H1 (cell line): ENCODE measurements at regions of chr7 and their contacts with region 1.

Region 1: DNA sequence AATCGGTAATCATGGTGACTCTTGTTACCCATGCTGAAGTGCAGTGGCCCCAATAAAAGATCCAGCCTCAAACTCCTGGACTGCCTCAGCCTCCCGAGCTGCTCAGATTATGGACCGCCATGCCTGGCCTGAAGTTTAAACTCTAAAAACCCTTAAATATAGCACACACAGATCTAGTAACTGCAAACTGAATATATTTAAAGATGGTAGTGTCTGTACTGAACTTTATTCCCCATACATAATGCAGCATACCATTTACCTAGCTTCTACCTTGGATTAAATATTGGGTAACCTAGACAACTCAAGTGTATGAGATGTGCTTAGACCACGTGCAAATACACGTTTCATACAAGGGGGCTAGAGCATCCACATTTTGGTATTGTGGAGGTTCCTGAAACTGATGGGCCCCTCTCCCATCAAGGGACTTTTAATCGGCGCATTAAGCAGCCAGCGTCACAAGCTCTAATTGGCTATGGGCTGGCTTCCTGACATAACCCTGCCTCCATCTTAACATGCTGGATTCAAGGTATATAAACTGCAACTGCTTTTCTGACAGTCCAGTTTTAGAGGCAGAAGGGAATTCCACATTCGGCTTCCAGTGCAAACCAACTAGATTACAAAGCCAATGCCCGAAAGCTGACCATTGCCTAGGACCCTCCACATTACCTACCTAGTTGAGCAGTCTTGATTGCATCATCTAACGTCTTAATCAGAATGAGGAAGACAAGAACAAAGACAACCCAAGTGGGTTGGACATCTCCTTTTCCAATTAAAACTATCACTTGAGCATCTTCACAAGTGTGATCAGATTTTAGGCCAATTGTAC is 13.0 kb downstream of the HNRNPA2B1 start:
- DNase-seq: no peak
- H3K4me3 ChIP-seq: no peak overlapping the region
- H3K27ac ChIP-seq: peak overlapping the region; percentile 13
- H3K4me1 ChIP-seq: no peaks in the 10 kb centered on the region
- H3K27me3 ChIP-seq: no peaks in the 10 kb centered on the region
- CTCF ChIP-seq: no peak
- EP300 ChIP-seq: no peak
- POLR2A ChIP-seq: peak; percentile 89 to 92
- RAD21 ChIP-seq: no peak

Region 2: GRCh38 chr7:26078437-26079336 is 108.9 kb before region 1 on chr7:
- CTCF ChIA-PET with region 1: interaction called, 5 read pairs
- POLR2A ChIA-PET with region 1: interaction called, 230 read pairs
- DNase-seq: peak; percentile 36 to 87
- H3K4me3 ChIP-seq: peak overlapping the region in 1 of 4 experiments; percentile 3; a peak in 1 of 8 replicates
- H3K27ac ChIP-seq: no peak overlapping the region
- H3K4me1 ChIP-seq: peaks cover 1 to 7% (median 3%) of the 10 kb centered on the region in 4 experiments; a peak in 3 of 7 replicates
- H3K27me3 ChIP-seq: no peaks in the 10 kb centered on the region; a peak in 2 of 7 replicates
- CTCF ChIP-seq: peak; percentile 49 to 64 (median 56)
- EP300 ChIP-seq: no peak
- POLR2A ChIP-seq: no peak
- RAD21 ChIP-seq: peak; percentile 46 to 66; a peak in 3 of 4 replicates

Region 3: GRCh38 chr7:26101361-26102151 is 86.0 kb before region 1 on chr7:
- CTCF ChIA-PET with region 1: no interaction called
- POLR2A ChIA-PET with region 1: interaction called, 19 read pairs
- DNase-seq: peak in 1 of 2 experiments; percentile 61
- H3K4me3 ChIP-seq: peak overlapping the region in 1 of 4 experiments; percentile 7; a peak in 1 of 8 replicates
- H3K27ac ChIP-seq: peak overlapping the region; percentile 53; the same call in 1 of the 2 replicates
- H3K4me1 ChIP-seq: peaks cover 7 to 16% (median 12%) of the 10 kb centered on the region in 4 experiments
- H3K27me3 ChIP-seq: no peaks in the 10 kb centered on the region
- CTCF ChIP-seq: no peak
- EP300 ChIP-seq: no peak
- POLR2A ChIP-seq: no peak; a peak in 1 of 3 replicates
- RAD21 ChIP-seq: 0 out of 4 replicates have a peak, but pooled peaks of 1 of the 2 experiments have one; percentile 2

Region 4: DNA sequence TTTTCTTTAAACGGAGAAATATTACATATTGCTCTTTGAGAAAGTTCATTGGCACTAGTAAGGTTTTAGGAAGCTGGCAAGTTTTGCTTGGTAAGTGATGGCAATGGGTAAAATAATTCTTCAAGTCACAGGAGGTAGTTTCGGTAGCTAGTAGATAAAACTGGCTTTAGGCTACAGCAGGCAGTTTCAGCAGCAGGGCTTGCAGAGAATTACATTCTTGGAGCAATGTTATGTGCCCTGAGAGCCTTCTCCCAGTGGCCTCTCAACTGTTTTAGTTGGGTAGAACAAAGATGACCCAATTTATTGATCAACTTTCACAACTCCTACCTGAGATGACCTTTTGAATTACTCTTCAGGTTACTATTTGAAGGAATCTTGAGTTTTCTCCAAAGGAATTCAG is 52.1 kb before region 1 on chr7:
- CTCF ChIA-PET with region 1: no interaction called
- POLR2A ChIA-PET with region 1: interaction called, 13 read pairs
- DNase-seq: no peak
- H3K4me3 ChIP-seq: no peak overlapping the region
- H3K27ac ChIP-seq: no peak overlapping the region
- H3K4me1 ChIP-seq: no peaks in the 10 kb centered on the region
- H3K27me3 ChIP-seq: no peaks in the 10 kb centered on the region; a peak in 1 of 7 replicates
- CTCF ChIP-seq: no peak
- EP300 ChIP-seq: no peak
- POLR2A ChIP-seq: no peak
- RAD21 ChIP-seq: no peak

Region 5: DNA sequence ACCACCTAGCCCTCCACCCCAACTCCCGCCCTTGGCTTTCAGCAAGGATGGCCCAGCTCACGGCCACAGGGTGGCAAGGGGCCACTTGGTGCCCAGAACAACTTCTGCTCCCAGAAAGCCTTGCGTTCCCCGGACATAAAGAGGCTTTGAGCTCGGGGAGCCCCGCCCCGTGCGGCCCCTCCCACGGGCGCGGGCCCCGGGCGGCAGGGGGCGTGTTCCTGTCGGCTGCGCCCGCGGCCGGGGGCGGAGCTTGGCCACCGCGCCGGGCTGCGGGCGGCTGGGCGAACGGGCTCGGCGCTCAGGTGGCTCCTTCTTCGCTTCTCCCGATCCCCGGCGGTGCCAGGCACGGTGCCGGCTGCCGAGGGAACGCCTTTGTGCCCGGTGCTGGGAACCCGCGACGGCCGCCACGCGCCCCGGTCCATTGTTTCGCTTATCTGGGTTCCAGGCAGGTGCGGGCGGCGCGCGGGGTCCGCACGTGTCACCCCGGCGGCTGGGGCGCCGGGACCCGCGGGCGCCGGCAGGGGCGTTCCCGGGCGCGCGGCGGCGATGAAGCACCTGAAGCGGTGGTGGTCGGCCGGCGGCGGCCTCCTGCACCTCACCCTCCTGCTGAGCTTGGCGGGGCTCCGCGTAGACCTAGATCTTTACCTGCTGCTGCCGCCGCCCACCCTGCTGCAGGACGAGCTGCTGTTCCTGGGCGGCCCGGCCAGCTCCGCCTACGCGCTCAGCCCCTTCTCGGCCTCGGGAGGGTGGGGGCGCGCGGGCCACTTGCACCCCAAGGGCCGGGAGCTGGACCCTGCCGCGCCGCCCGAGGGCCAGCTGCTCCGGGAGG is 35.4 kb before region 1 on chr7 and contains the start of gene NFE2L3:
- CTCF ChIA-PET with region 1: interaction called, 4 read pairs
- POLR2A ChIA-PET with region 1: interaction called, 56 read pairs
- DNase-seq: peak in 1 of 2 experiments; percentile 87
- H3K4me3 ChIP-seq: peak within 1 kb of the TSS; percentile 65 to 99 (median 95)
- H3K27ac ChIP-seq: peak within 1 kb of the TSS; percentile 91
- H3K4me1 ChIP-seq: peaks cover 17 to 32% (median 22%) of the 10 kb centered on the region in 4 experiments
- H3K27me3 ChIP-seq: peaks cover 0 to 7% (median 0%) of the 10 kb centered on the region in 4 experiments; a peak in 2 of 7 replicates
- CTCF ChIP-seq: peak in 1 of 3 experiments; percentile 18; a peak in 1 of 4 replicates
- EP300 ChIP-seq: peak in 1 of 2 experiments; percentile 4; a peak in 1 of 3 replicates
- POLR2A ChIP-seq: peak; percentile 67 to 77
- RAD21 ChIP-seq: peak in 1 of 2 experiments; percentile 24; a peak in 1 of 4 replicates
- total RNA-seq, gene NFE2L3: 62.6 and 64.9 TPM in 2 replicates

Region 6: GRCh38 chr7:26208040-26208439 is 20.4 kb after region 1 on chr7:
- CTCF ChIA-PET with region 1: interaction called, 5 read pairs
- POLR2A ChIA-PET with region 1: interaction called, 578 read pairs
- DNase-seq: no peak
- H3K4me3 ChIP-seq: no peak overlapping the region
- H3K27ac ChIP-seq: no peak overlapping the region
- H3K4me1 ChIP-seq: peaks cover 0 to 6% (median 3%) of the 10 kb centered on the region in 4 experiments; a peak in 3 of 7 replicates
- H3K27me3 ChIP-seq: no peaks in the 10 kb centered on the region
- CTCF ChIP-seq: no peak
- EP300 ChIP-seq: no peak
- POLR2A ChIP-seq: no peak; a peak in 1 of 3 replicates
- RAD21 ChIP-seq: no peak

Region 7: GRCh38 chr7:26365077-26365900 is 177.7 kb after region 1 on chr7:
- CTCF ChIA-PET with region 1: interaction called, 9 read pairs
- POLR2A ChIA-PET with region 1: interaction called, 22 read pairs
- DNase-seq: no peak
- H3K4me3 ChIP-seq: no peak overlapping the region
- H3K27ac ChIP-seq: no peak overlapping the region
- H3K4me1 ChIP-seq: no peaks in the 10 kb centered on the region; a peak in 1 of 7 replicates
- H3K27me3 ChIP-seq: no peaks in the 10 kb centered on the region
- CTCF ChIP-seq: peak in 2 of 3 experiments; percentile 64 to 73; a peak in 3 of 4 replicates
- EP300 ChIP-seq: no peak
- POLR2A ChIP-seq: no peak
- RAD21 ChIP-seq: peak; percentile 95 to 98

Region 8: DNA sequence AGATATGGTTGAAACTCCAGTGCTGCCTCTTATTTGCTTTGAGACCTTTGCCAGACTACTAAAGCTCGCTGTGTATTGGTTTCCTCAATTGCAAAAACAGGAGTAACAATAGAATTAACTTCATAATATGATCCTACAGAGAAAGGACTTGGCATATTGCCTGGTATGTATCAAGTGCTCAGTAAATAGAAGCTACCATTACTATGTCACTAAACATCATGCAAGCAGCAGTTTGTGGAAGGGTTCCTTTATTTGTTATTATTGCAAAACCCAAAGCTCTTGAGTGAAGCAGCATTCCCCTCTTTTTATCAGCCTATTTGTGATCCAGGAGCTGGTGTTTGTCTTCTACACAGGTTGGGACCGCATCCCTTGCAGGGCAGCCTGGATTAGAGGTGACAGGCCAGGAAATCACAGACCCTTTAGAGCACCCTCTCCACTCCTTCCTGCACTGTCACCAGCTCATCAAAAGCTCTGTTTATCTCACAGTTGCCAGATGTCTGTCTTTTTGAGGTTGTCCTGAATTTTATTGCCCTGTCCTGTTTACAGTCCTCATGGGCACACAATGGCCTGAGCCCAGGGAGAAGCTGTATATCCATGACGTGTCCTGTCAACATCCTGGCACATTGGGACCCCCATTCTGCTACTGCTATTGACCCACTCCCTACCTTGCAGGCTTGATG is 225.6 kb after region 1 on chr7:
- CTCF ChIA-PET with region 1: no interaction called
- POLR2A ChIA-PET with region 1: no interaction called
- DNase-seq: no peak
- H3K4me3 ChIP-seq: no peak overlapping the region
- H3K27ac ChIP-seq: no peak overlapping the region
- H3K4me1 ChIP-seq: peaks cover 0 to 6% (median 1%) of the 10 kb centered on the region in 4 experiments; a peak in 3 of 7 replicates
- H3K27me3 ChIP-seq: no peaks in the 10 kb centered on the region
- CTCF ChIP-seq: no peak
- EP300 ChIP-seq: no peak
- POLR2A ChIP-seq: no peak
- RAD21 ChIP-seq: no peak

Region 9: DNA sequence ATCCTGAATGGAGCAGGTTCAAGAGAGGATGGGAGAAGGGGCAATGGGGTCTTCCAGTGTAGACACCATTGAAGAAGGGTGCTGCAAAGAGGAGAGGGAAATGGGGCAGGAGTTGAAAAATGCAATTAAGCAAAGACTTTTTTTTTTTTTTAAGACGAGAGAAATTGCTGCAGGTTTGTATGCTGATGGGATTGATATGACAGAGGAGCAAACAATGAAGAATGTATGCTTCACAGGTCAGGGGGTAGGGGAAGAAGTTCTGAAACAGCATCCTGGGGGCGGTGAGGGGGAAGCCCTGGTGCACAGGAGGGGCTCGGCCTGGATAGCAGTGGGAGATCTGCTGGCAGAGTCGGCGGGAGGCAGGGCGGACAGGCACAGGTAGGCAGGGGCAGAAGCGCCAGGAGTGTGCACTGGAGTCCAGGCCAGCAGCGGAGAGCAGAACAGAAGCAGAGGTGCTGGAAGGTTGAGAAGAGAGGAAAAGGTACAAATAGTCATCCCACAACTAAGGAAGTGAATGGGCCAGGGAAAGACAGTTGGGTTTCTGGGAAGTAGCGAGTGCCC is 279.5 kb after region 1 on chr7:
- CTCF ChIA-PET with region 1: no interaction called
- POLR2A ChIA-PET with region 1: no interaction called
- DNase-seq: no peak
- H3K4me3 ChIP-seq: no peak overlapping the region
- H3K27ac ChIP-seq: no peak overlapping the region
- H3K4me1 ChIP-seq: no peaks in the 10 kb centered on the region
- H3K27me3 ChIP-seq: no peaks in the 10 kb centered on the region; a peak in 1 of 7 replicates
- CTCF ChIP-seq: no peak
- EP300 ChIP-seq: no peak
- POLR2A ChIP-seq: no peak
- RAD21 ChIP-seq: no peak

Region 10: GRCh38 chr7:26937939-26938623 is 750.5 kb after region 1 on chr7:
- CTCF ChIA-PET with region 1: no interaction called
- POLR2A ChIA-PET with region 1: no interaction called
- DNase-seq: no peak
- H3K4me3 ChIP-seq: no peak overlapping the region
- H3K27ac ChIP-seq: no peak overlapping the region
- H3K4me1 ChIP-seq: peaks cover 0 to 2% (median 0%) of the 10 kb centered on the region in 4 experiments; a peak in 1 of 7 replicates
- H3K27me3 ChIP-seq: no peaks in the 10 kb centered on the region
- CTCF ChIP-seq: no peak
- EP300 ChIP-seq: no peak
- POLR2A ChIP-seq: no peak
- RAD21 ChIP-seq: no peak